ENCODE measurements at regions of chr22 and their contacts with region 1.

Region 1: DNA sequence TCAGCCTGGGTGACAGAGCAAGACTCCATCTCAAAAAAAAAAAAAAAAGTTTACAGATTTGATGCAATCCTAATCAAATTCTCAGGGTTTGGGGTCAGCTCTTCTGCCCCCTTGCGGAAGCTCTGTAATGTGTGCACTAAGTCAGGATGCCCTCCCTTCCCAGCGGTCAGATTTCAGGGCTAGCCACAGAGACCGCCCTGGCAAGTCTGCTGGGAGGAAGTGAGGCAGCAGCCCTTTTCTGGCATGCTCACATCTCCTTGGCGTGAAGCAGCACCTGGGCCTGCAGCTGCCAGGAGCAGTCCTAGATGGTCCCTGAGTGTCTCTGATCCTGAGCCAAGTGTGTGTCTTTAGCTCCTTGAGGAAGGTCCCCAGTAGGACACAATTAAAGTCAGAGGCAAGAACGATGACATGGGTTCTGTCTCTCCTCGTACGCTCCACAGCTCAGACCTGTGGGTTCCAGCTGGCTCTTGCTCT is 10.9 kb upstream of the APOBEC3C start:
- DNase-seq: peak; percentile 80
- ATAC-seq: peak; percentile 97
- H3K4me3 ChIP-seq: no peak overlapping the region
- H3K27ac ChIP-seq: peak overlapping the region; percentile 3; the same call in 1 of the 2 replicates
- H3K4me1 ChIP-seq: peaks cover 7 to 13% of the 10 kb centered on the region in 2 experiments; a peak in 3 of 4 replicates
- H3K27me3 ChIP-seq: no peaks in the 10 kb centered on the region
- CTCF ChIP-seq: peak; percentile 72 to 92 (median 75)
- POLR2A ChIP-seq: no peak
- RAD21 ChIP-seq: peak; percentile 86

Region 2: DNA sequence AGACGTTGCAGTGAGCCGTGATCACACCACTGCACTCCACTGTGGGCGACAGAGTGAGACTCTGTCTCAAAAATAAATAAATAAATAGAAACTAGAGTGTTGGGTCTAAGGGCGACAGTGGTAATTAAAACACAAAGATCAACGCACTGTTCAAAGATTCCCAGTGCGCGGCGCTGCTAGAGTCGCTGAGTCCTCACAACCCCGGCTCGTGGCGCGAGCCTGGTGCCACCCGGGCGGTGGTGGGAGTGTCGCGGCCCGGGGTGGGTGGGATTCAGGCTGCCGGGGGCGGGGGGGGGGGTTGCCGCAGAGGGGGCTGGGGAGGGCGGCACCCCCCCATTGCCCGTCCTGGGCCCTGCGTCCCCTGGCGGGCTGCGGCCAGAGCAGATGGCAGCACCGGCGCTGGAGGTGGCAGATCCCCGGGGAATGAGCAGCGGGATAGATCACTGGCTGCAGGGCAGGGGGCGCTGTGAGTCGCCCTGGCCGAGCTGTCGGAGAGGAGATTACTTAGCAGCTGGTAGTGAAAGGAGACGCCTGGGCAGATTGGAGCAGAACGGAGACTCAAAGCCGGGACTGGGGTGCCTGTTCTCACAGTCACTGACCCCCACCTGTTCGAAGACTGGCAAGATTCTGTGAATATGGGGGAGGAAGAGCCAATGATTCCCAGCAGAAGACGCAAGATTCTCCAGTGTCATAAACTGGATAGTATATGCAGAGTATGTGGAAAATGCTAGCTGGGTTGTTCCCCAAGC is 76.0 kb before region 1 on chr22:
- CTCF ChIA-PET with region 1: interaction called, 13 read pairs
- POLR2A ChIA-PET with region 1: no interaction called
- RAD21 ChIA-PET with region 1: interaction called in 1 of 2 experiments, 5 read pairs
- intact Hi-C with region 1: loop called (anchors 1 kb)
- DNase-seq: peak; percentile 74
- ATAC-seq: peak; percentile 75
- H3K4me3 ChIP-seq: peak overlapping the region; percentile 29 to 46
- H3K27ac ChIP-seq: peak overlapping the region; percentile 48
- H3K4me1 ChIP-seq: peaks cover 41 to 53% of the 10 kb centered on the region in 2 experiments
- H3K27me3 ChIP-seq: no peaks in the 10 kb centered on the region
- CTCF ChIP-seq: peak; percentile 77 to 90 (median 85)
- POLR2A ChIP-seq: no peak
- RAD21 ChIP-seq: peak; percentile 66

Region 3: DNA sequence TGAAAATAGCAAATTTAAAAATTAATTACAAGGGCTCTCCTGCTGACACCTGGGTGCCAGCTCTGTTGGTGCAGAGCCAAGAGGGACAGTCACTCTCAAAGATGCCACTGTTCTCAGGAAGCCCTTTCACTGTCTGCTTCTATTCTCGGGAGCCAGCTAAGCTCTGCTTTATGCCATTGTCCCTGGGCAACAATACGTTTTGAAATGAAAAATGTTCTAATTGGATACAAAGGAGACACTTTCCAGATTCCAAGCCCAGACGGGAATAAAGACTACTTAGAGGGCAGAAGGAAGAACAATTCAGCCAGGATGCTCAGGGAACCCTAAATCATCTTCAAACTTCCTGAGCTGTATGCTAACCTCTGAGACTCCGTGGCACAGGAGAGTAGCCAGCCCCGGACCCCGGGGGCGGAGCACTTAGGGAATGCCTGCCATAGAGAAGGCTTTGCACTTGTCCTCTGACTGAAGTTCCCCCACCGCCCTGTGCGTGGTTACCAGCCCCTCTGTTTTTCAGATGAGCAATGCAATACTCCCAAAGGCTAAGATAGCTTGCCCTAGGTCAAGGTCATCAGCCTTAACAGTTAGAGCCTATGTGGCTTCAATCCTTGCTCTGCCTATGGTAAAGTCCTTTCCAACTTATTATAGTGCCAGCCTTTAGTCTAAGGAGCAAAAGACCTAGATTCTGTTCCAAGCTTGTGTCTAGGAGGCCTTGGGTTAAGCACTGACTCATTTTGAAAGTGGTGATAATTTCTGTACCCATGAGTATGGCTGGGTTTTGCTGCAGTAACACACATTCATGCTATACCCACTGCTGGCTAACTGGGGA is 718.2 kb after region 1 on chr22:
- CTCF ChIA-PET with region 1: no interaction called
- POLR2A ChIA-PET with region 1: no interaction called
- RAD21 ChIA-PET with region 1: no interaction called
- intact Hi-C with region 1: no loop called
- DNase-seq: no peak
- ATAC-seq: no peak
- H3K4me3 ChIP-seq: no peak overlapping the region
- H3K27ac ChIP-seq: no peak overlapping the region
- H3K4me1 ChIP-seq: peaks cover 5 to 12% of the 10 kb centered on the region in 2 experiments; a peak in 3 of 4 replicates
- H3K27me3 ChIP-seq: no peaks in the 10 kb centered on the region
- CTCF ChIP-seq: no peak
- POLR2A ChIP-seq: no peak
- RAD21 ChIP-seq: no peak